Common myeloid progenitor, CD34-positive (primary cell): ENCODE measurements at regions of chr12 and their contacts with region 1.

Region 1: GRCh38 chr12:751192-751998 is 984 bp upstream of the WNK1 start:
- DNase-seq: peak; percentile 98
- H3K4me3 ChIP-seq: peak overlapping the region; percentile 18 to 98 (median 77)
- H3K27ac ChIP-seq: peak overlapping the region in 1 of 2 experiments; percentile 75
- H3K4me1 ChIP-seq: peaks cover 28 to 51% (median 41%) of the 10 kb centered on the region in 4 experiments
- H3K27me3 ChIP-seq: no peaks in the 10 kb centered on the region

Region 2: DNA sequence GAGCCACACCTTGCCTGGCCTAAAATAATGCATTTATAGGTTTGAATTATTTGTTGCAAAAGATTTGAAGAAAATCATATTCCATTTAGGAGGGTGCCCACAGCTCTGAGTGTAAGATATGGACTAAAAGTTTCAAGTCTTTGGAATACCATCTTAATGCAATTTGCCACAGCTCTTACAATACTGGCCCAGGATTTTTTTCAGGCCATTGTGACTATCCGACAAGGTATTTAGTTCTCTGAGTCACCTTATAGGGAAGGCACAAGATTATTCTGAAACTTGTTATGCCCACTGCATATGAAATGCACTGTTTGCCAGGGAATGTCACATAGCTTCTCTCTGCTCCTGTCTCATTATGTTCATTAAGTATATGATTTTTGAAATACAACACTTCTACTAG is 459.2 kb before region 1 on chr12:
- CTCF ChIA-PET with region 1: no interaction called
- POLR2A ChIA-PET with region 1: no interaction called
- DNase-seq: no peak
- H3K4me3 ChIP-seq: no peak overlapping the region
- H3K27ac ChIP-seq: no peak overlapping the region
- H3K4me1 ChIP-seq: no peaks in the 10 kb centered on the region
- H3K27me3 ChIP-seq: no peaks in the 10 kb centered on the region

Region 3: GRCh38 chr12:583234-583869 is 168.0 kb before region 1 on chr12:
- CTCF ChIA-PET with region 1: no interaction called
- POLR2A ChIA-PET with region 1: no interaction called
- DNase-seq: no peak
- H3K4me3 ChIP-seq: no peak overlapping the region
- H3K27ac ChIP-seq: no peak overlapping the region
- H3K4me1 ChIP-seq: peaks cover 0 to 5% (median 1%) of the 10 kb centered on the region in 4 experiments
- H3K27me3 ChIP-seq: no peaks in the 10 kb centered on the region

Region 4: DNA sequence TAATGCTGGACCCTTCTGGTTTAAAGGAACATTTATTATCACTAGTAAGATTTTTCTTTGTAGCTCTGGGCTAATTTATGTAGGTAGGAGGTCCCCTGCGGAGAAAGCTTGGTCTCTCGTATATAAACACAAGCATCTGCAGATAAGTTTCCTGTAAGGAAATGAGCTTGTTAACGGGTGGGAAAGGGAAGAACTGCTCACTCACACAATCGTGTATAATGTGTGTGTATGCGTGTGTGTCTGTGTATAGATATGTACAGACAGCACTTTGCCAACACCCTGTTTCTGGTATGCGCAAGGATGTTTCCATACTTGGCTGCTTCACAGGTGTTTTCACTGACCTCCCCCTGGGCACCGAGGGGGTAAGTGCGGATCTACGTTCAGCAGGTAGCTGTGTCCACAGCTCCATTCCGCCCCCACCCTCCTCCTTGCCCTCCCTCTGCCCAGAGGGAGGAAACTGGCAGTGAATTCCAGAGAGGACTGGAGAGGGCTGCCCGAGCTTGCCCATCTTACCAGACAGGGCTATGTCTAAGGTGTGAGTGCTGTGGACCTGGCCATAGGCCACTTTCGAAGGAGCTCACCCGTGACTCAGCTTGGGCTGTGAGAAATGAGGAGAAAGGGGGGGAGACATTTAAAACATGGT is 153.3 kb before region 1 on chr12:
- CTCF ChIA-PET with region 1: interaction called, 10 read pairs
- POLR2A ChIA-PET with region 1: no interaction called
- DNase-seq: peak; percentile 64 to 90 (median 83)
- H3K4me3 ChIP-seq: peak overlapping the region in 5 of 7 experiments; percentile 10 to 63 (median 53)
- H3K27ac ChIP-seq: peak overlapping the region; percentile 83 to 89
- H3K4me1 ChIP-seq: peaks cover 12 to 46% (median 32%) of the 10 kb centered on the region in 4 experiments
- H3K27me3 ChIP-seq: no peaks in the 10 kb centered on the region

Region 5: DNA sequence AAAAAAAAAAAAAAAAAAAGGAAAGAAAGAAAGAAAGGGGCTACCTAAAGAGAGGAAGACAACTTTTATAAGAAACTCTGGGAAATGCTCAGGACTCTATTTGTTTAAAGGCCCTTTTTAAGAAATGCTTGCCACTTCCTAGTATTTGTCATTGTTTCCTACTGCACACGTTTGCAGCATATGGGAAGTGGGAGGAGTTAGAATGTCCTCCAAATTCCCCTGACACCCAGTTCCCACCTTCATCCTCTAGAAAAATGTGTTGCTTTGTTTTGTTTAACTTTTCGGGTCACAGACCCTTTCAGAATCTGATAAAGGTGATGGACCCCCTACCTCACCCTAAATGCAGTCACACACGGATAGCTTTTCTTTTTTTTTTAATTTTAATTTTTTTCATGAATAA is 129.0 kb before region 1 on chr12:
- CTCF ChIA-PET with region 1: interaction called, 17 read pairs
- POLR2A ChIA-PET with region 1: no interaction called
- DNase-seq: peak; percentile 59 to 76 (median 68)
- H3K4me3 ChIP-seq: no peak overlapping the region
- H3K27ac ChIP-seq: peak overlapping the region in 1 of 2 experiments; percentile 2
- H3K4me1 ChIP-seq: peaks cover 11 to 42% (median 31%) of the 10 kb centered on the region in 4 experiments
- H3K27me3 ChIP-seq: no peaks in the 10 kb centered on the region

Region 6: GRCh38 chr12:650983-651382 is 100.4 kb before region 1 on chr12:
- CTCF ChIA-PET with region 1: interaction called, 29 read pairs
- POLR2A ChIA-PET with region 1: no interaction called
- DNase-seq: peak in 2 of 3 donors; percentile 55 to 62
- H3K4me3 ChIP-seq: no peak overlapping the region
- H3K27ac ChIP-seq: no peak overlapping the region
- H3K4me1 ChIP-seq: peaks cover 2 to 13% (median 4%) of the 10 kb centered on the region in 4 experiments
- H3K27me3 ChIP-seq: no peaks in the 10 kb centered on the region

Region 7: DNA sequence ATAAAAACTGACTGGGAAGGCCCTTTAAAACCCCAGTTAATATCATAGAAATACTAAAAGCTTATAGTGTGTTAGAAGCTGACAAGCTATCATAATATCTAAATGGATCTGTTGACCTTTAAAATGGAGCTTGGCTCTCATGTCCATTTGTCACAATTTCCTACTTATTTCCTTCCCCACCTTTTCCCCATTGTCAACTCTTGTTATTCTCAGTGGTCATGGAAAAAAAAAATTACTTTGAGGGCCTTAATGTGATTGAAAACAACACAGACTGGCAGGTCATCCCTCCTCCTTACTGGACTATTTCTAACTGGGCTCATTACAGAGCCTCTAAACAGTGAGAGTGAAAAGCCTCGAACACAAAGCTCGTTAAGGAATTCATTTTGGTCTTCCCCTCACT is 12.7 kb before region 1 on chr12:
- CTCF ChIA-PET with region 1: interaction called, 18 read pairs
- POLR2A ChIA-PET with region 1: no interaction called
- DNase-seq: no peak
- H3K4me3 ChIP-seq: no peak overlapping the region
- H3K27ac ChIP-seq: no peak overlapping the region
- H3K4me1 ChIP-seq: no peaks in the 10 kb centered on the region
- H3K27me3 ChIP-seq: no peaks in the 10 kb centered on the region